ENCODE measurements at regions of chr21 and their contacts with region 1.

Region 1: GRCh38 chr21:26845066-26845758 is at the start of gene ADAMTS1:
- DNase-seq: peak; percentile 92
- H3K4me3 ChIP-seq: peak within 1 kb of the TSS; percentile 94
- H3K27ac ChIP-seq: peak within 1 kb of the TSS; percentile 99
- H3K4me1 ChIP-seq: peaks cover 86% of the 10 kb centered on the region
- H3K27me3 ChIP-seq: no peaks in the 10 kb centered on the region
- CTCF ChIP-seq: peak; percentile 38
- total RNA-seq, gene ADAMTS1: 56.7 TPM

Region 2: DNA sequence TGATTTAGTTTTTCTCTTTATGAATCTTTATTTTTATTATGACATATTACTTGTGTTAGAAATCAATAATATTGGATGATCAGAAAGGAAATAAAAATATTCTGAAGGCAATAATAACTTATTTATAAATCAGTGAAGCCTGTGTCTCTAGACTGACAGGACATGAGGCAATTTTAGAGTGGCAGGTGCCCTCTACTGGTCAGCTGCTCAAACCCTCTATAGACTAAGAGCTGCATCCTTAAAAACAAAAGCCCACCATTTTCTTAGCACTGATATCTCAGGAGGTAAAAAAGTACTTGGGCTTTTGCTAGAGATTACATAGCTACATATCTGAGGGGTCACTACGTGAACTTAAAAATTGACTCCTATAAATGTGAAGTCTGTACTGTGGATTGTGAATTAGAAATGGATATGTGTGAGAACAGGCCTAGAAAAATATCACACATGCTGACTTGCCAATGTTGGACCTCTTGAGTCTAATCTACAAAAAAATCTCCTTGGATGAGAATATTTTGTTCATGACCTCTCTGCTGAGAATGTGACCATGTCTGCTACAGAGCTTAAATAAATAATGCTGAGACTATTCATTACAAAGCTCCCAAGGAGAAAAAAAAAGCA is 719.6 kb after region 1 on chr21:
- intact Hi-C with region 1: loop called (anchors 10 kb)
- DNase-seq: peak; percentile 23
- H3K4me3 ChIP-seq: no peak overlapping the region
- H3K27ac ChIP-seq: no peak overlapping the region
- H3K4me1 ChIP-seq: peaks cover 2% of the 10 kb centered on the region
- H3K27me3 ChIP-seq: no peaks in the 10 kb centered on the region
- CTCF ChIP-seq: peak; percentile 88

Region 3: DNA sequence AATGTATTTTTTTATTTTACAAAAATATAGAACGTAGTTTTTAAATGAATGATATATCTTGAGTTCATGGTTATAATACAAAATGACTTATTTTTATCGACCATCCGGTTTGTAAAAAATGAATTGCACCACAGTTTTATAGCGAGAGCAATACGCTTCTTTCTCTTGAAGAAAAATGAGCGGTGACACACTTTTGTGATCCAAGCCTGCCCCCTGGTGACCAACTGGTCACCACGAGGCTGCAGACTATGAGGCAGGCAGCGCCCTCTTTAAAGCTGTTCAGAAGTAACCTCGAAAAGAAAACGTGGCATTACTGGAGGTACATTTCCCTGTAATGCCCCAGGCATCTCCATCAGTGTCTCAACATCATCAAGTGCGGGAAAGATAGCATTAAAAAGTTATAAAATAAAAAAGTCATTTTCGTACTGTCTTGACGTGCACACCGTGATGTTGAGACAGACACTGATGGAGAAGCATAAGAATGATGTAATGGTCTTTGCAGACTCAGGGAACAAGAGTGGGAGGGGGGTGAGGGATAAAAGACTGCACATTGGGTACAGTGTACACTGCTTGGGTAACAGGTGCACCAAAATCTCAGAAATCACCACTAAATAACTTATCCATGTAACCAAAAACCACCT is 855.9 kb after region 1 on chr21:
- intact Hi-C with region 1: loop called (anchors 2 kb)
- DNase-seq: peak; percentile 83
- H3K4me3 ChIP-seq: peak overlapping the region; percentile 9
- H3K27ac ChIP-seq: no peak overlapping the region
- H3K4me1 ChIP-seq: peaks cover 4% of the 10 kb centered on the region
- H3K27me3 ChIP-seq: no peaks in the 10 kb centered on the region
- CTCF ChIP-seq: peak; percentile 93

Region 4: GRCh38 chr21:28336314-28336713 is 1491.1 kb after region 1 on chr21:
- intact Hi-C with region 1: loop called (anchors 5 kb)
- DNase-seq: no peak
- H3K4me3 ChIP-seq: no peak overlapping the region
- H3K27ac ChIP-seq: peak overlapping the region; percentile 2
- H3K4me1 ChIP-seq: peaks cover 40% of the 10 kb centered on the region
- H3K27me3 ChIP-seq: no peaks in the 10 kb centered on the region
- CTCF ChIP-seq: peak; percentile 69

Region 5: GRCh38 chr21:28745131-28746016 is 1900.2 kb after region 1 on chr21:
- intact Hi-C with region 1: loop called (anchors 5 kb)
- DNase-seq: peak; percentile 66
- H3K4me3 ChIP-seq: peak overlapping the region; percentile 63
- H3K27ac ChIP-seq: peak overlapping the region; percentile 85
- H3K4me1 ChIP-seq: peaks cover 41% of the 10 kb centered on the region
- H3K27me3 ChIP-seq: no peaks in the 10 kb centered on the region
- CTCF ChIP-seq: peak; percentile 94